ENCODE measurements at regions of chr7 and their contacts with region 1.

Region 1: DNA sequence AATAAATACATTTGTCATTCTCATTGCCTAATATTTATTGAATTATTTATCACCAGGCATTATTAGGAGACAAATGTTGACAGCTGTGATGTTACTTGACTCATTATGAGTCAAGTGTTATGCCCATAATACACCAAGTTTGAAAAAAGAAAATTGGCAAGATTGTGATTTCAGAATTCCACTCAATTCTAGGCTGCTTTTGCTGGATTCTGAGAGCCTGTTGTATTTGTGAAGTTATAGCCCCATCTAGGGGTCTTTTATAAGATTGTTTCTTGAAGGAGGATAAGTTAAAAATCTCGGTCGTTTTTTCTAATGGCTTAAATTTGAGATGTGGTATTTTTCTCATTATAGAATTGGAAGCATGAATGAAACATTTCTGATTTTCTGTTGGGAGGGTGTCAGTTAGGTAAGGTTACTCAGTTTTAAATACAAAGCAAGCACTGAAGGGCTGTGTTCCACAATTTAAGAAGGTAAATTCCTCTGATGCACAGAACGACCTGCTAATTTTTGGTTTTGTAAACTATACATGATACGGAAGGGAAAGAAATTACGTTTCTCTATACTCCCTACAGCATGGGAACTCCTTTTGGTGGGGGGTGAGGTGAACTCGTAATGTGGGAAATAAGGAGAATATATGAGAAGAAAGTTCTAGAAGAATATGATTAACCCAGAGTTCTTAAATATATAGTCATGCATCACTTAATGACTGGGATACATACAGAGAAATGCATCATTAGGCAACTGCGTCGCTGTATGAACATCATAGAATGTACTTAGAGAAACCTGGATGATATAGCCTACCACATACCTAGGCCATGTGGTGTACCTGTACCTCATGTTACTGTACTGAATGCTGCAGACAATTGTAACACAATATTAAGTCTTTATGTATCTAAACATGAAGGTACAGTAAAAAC is 2.6 kb downstream of the STK31 start:
- DNase-seq: peak; percentile 9 to 44 (median 32)
- H3K4me3 ChIP-seq: no peak overlapping the region
- H3K4me3 Mint-ChIP-seq: no peak overlapping the region
- H3K27ac ChIP-seq: no peak overlapping the region
- H3K27ac Mint-ChIP-seq: no peak overlapping the region
- H3K4me1 ChIP-seq: no peaks in the 10 kb centered on the region
- H3K4me1 Mint-ChIP-seq: no peaks in the 10 kb centered on the region
- H3K27me3 ChIP-seq: no peaks in the 10 kb centered on the region
- H3K27me3 Mint-ChIP-seq: peaks cover 0 to 2% (median 1%) of the 10 kb centered on the region in 3 donors
- CTCF ChIP-seq: peak; percentile 67

Region 2: GRCh38 chr7:23273141-23273599 is 439.5 kb before region 1 on chr7:
- intact Hi-C with region 1: loop called in 1 of 2 experiments (anchors 10 kb)
- DNase-seq: peak; percentile 65 to 79 (median 77)
- H3K4me3 ChIP-seq: no peak overlapping the region
- H3K4me3 Mint-ChIP-seq: peak overlapping the region; percentile 25 to 56
- H3K27ac ChIP-seq: no peak overlapping the region
- H3K27ac Mint-ChIP-seq: no peak overlapping the region
- H3K4me1 ChIP-seq: peaks cover 2 to 5% of the 10 kb centered on the region in 2 donors
- H3K4me1 Mint-ChIP-seq: peaks cover 5% of the 10 kb centered on the region
- H3K27me3 ChIP-seq: no peaks in the 10 kb centered on the region
- H3K27me3 Mint-ChIP-seq: peaks cover 3 to 7% (median 5%) of the 10 kb centered on the region in 3 donors
- CTCF ChIP-seq: peak; percentile 94

Region 3: DNA sequence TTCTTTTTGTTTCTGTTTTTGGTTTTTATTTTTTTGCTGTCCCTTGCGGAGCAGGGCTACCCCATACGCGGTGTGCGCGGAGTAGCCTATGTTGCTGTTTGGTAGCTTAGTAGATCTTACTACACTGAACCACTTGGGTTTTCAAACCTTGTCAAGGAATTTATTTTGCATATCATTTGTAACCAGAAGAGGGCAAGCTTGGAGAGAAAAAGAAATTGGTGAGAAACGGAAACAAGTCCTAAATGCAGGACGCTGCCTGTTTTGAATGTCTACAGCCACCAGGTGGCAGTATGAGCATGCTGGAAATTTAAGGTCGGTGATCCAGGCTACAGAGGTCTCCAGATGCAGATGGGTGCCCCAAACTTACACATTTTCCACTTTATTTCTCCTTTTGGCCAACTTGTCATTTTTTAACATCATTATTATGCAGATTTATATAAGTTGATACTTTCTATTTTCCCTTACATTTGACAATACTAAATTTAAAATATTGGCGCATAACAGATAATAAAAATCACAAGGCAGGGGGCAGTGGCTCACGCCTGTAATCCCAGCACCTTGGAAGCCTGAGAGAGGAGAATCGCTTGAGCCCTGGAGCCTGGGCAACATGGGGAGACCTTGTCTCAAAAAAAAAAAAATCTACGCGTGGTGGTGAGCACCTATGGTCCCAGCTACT is 165.6 kb before region 1 on chr7:
- intact Hi-C with region 1: loop called in 1 of 2 experiments (anchors 5 kb)
- DNase-seq: peak; percentile 75 to 76 (median 76)
- H3K4me3 ChIP-seq: peak overlapping the region in 1 of 3 experiments; percentile 23
- H3K4me3 Mint-ChIP-seq: no peak overlapping the region
- H3K27ac ChIP-seq: no peak overlapping the region
- H3K27ac Mint-ChIP-seq: peak overlapping the region in 1 of 7 donors; percentile 30
- H3K4me1 ChIP-seq: no peaks in the 10 kb centered on the region
- H3K4me1 Mint-ChIP-seq: peaks cover 11% of the 10 kb centered on the region
- H3K27me3 ChIP-seq: no peaks in the 10 kb centered on the region
- H3K27me3 Mint-ChIP-seq: peaks cover 2 to 11% (median 6%) of the 10 kb centered on the region in 3 donors
- CTCF ChIP-seq: peak; percentile 95

Region 4: GRCh38 chr7:23570592-23571200 is 141.9 kb before region 1 on chr7:
- intact Hi-C with region 1: loop called (anchors 2 to 5 kb)
- DNase-seq: peak; percentile 35 to 68 (median 56)
- H3K4me3 ChIP-seq: no peak overlapping the region
- H3K4me3 Mint-ChIP-seq: no peak overlapping the region
- H3K27ac ChIP-seq: no peak overlapping the region
- H3K27ac Mint-ChIP-seq: no peak overlapping the region
- H3K4me1 ChIP-seq: no peaks in the 10 kb centered on the region
- H3K4me1 Mint-ChIP-seq: no peaks in the 10 kb centered on the region
- H3K27me3 ChIP-seq: no peaks in the 10 kb centered on the region
- H3K27me3 Mint-ChIP-seq: peaks cover 0 to 13% (median 2%) of the 10 kb centered on the region in 3 donors
- CTCF ChIP-seq: peak; percentile 82

Measured in CD14-positive monocyte (primary cell).